ENCODE measurements at regions of chr2 and their contacts with region 1.

Region 1: GRCh38 chr2:234437642-234438304 is 59.1 kb downstream of the ARL4C start:
- DNase-seq: peak in 1 of 2 donors; percentile 50
- ATAC-seq: peak; percentile 34 to 82 (median 66)
- H3K4me3 ChIP-seq: no peak overlapping the region
- H3K27ac ChIP-seq: peak overlapping the region in 2 of 10 donors; percentile 24 to 41
- H3K4me1 ChIP-seq: peaks cover 0 to 43% (median 31%) of the 10 kb centered on the region in 9 donors
- H3K27me3 ChIP-seq: no peaks in the 10 kb centered on the region
- CTCF ChIP-seq: no peak

Region 2: DNA sequence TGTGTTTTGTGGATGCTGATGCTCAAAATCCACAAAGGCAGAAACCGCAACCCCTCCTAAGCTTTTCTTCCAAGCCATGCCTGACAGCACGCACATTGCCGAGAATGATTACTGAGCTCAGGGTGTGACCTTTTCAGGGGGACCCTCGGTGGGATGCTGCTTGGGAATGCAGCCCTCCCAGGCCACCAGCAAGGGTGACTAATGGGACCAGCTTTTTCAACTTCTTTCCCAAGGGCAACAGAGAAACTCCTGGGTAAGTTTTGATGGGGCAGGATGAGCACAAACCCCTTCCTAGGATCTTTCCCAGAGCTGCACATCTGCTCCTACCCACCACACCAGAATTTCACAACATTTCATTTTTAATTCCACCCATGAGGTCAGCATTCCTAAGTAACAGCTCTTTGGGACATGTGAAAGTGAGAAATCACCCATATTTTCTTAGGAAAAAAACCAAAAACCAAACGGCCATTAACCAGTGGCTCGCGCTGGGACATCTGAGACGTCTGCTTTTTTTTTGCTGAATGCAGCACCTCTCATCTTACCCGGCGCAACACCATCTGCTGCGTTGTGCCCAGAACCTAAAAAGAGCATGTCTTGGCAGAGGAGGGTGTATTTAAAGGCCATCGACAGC is 59.9 kb before region 1 on chr2:
- intact Hi-C with region 1: no loop called
- DNase-seq: no peak
- ATAC-seq: no peak
- H3K4me3 ChIP-seq: no peak overlapping the region
- H3K27ac ChIP-seq: no peak overlapping the region
- H3K4me1 ChIP-seq: peaks cover 0 to 6% (median 0%) of the 10 kb centered on the region in 9 donors
- H3K27me3 ChIP-seq: peaks cover 0 to 49% (median 14%) of the 10 kb centered on the region in 7 donors
- CTCF ChIP-seq: no peak

Region 3: GRCh38 chr2:234494361-234495250 is 56.8 kb after region 1 on chr2:
- intact Hi-C with region 1: loop called in 1 of 10 experiments (anchors 5 kb)
- DNase-seq: no peak
- ATAC-seq: no peak
- H3K4me3 ChIP-seq: peak overlapping the region; percentile 30 to 80 (median 64)
- H3K27ac ChIP-seq: peak overlapping the region in 3 of 10 donors; percentile 42 to 93 (median 69)
- H3K4me1 ChIP-seq: peaks cover 7 to 46% (median 27%) of the 10 kb centered on the region in 9 donors
- H3K27me3 ChIP-seq: peaks cover 0 to 26% (median 16%) of the 10 kb centered on the region in 7 donors
- CTCF ChIP-seq: no peak

Region 4: DNA sequence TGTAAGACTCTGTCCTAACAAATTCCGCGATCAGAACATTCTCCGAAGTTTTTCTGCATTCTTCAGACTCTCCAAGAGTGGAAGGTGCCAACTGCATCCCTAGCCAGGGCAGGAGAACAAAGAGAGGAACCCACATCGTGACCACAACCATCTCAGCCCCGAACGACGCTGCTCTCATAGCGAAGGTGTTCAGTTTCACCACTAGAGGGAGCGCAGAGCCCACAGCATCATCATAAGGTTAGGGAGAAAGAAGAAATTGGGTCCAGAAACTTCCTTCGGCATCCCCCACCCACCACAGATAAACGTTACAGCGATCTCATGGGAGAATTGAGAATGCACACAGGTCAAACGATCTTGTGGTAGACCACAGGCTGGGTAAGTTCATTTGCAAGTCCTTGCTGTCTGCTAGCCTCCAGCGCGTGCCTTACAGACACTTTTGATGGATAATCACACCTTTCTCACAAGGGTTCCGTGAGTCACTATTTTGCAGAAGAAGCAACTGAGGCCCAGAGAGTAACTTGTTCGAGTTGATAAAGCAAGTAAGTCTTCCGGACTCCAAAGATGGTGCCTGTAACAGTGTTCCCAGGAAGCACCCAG is 112.8 kb after region 1 on chr2:
- intact Hi-C with region 1: no loop called
- DNase-seq: peak; percentile 48 to 64
- ATAC-seq: peak in 7 of 8 donors; percentile 69 to 88 (median 80)
- H3K4me3 ChIP-seq: no peak overlapping the region
- H3K27ac ChIP-seq: no peak overlapping the region
- H3K4me1 ChIP-seq: peaks cover 0 to 8% (median 0%) of the 10 kb centered on the region in 9 donors
- H3K27me3 ChIP-seq: peaks cover 0 to 17% (median 7%) of the 10 kb centered on the region in 7 donors
- CTCF ChIP-seq: peak; percentile 82 to 98 (median 95)

Measured in heart right ventricle (tissue), 16 donors.